HepG2 (cell line): ENCODE measurements at regions of chr15 and their contacts with region 1.

Region 1: DNA sequence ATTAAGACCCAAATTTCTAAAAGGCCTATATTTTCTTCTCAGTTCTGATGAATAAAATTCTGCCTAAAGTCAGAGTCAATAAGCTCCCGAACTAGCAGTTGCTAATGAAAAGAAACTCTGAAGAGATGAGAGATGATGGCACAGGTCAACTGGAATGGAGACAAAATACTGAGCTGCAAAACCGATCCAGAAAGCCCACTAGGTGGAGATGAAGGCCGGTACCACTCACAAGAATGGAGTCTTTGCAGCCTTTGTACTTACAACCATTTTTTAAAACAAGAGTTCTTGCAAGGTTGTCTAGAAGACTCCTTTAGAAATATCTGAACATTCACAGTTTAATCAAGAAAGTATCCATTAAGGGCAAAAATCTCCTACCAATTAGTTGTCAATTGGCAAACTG is 119.9 kb upstream of the TJP1 start:
- DNase-seq: no peak
- ATAC-seq: peak; percentile 69
- H3K4me3 ChIP-seq: no peak overlapping the region
- H3K27ac ChIP-seq: no peak overlapping the region
- H3K4me1 ChIP-seq: no peaks in the 10 kb centered on the region
- H3K27me3 ChIP-seq: 0 out of 5 replicates have a peak, but pooled peaks cover 0 to 4% of the 10 kb centered on the region in 2 experiments
- CTCF ChIP-seq: peak; percentile 46
- EP300 ChIP-seq: no peak
- POLR2A ChIP-seq: no peak
- RAD21 ChIP-seq: no peak

Region 2: GRCh38 chr15:29435811-29436210 is 506.3 kb before region 1 on chr15:
- CTCF ChIA-PET with region 1: no interaction called
- POLR2A ChIA-PET with region 1: no interaction called
- in situ Hi-C with region 1: no loop called
- intact Hi-C with region 1: no loop called
- DNase-seq: no peak
- ATAC-seq: no peak
- H3K4me3 ChIP-seq: no peak overlapping the region
- H3K27ac ChIP-seq: no peak overlapping the region
- H3K4me1 ChIP-seq: no peaks in the 10 kb centered on the region
- H3K27me3 ChIP-seq: no peaks in the 10 kb centered on the region; a peak in 1 of 5 replicates
- CTCF ChIP-seq: no peak
- EP300 ChIP-seq: no peak
- POLR2A ChIP-seq: no peak
- RAD21 ChIP-seq: no peak

Region 3: GRCh38 chr15:30073915-30074314 is 131.8 kb after region 1 on chr15:
- CTCF ChIA-PET with region 1: no interaction called
- POLR2A ChIA-PET with region 1: no interaction called
- in situ Hi-C with region 1: no loop called
- intact Hi-C with region 1: loop called (anchors 10 kb)
- DNase-seq: no peak
- ATAC-seq: no peak
- H3K4me3 ChIP-seq: no peak overlapping the region
- H3K27ac ChIP-seq: no peak overlapping the region
- H3K4me1 ChIP-seq: no peaks in the 10 kb centered on the region
- H3K27me3 ChIP-seq: no peaks in the 10 kb centered on the region; a peak in 1 of 5 replicates
- CTCF ChIP-seq: no peak
- EP300 ChIP-seq: no peak
- POLR2A ChIP-seq: no peak
- RAD21 ChIP-seq: no peak